H1 (cell line): ENCODE measurements at regions of chr15 and their contacts with region 1.

Region 1: DNA sequence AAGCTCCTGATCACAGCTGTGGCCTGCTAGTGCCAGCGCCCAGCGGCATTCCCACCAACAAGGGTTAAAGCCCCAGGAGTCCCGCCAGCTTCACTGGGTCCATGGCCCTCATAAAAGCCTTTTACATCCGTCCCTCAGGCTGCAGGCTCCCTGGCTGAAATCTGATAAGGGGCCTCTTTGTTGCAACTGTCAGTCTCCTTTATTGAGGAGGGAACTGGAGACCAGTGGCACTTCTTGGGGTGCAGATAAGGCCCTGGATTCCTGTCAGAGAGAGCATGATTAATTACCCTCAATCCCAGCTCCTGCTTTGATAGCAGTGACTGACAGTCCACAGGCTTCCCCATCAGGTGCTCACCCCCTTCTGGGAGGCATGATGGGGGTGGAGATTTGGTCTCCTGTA is 30.9 kb upstream of the CLK3 start:
- DNase-seq: no peak
- H3K4me3 ChIP-seq: no peak overlapping the region
- H3K27ac ChIP-seq: no peak overlapping the region
- H3K4me1 ChIP-seq: peaks cover 0 to 6% (median 5%) of the 10 kb centered on the region in 4 experiments; a peak in 3 of 7 replicates
- H3K27me3 ChIP-seq: no peaks in the 10 kb centered on the region
- CTCF ChIP-seq: no peak
- EP300 ChIP-seq: no peak
- POLR2A ChIP-seq: no peak
- RAD21 ChIP-seq: no peak

Region 2: DNA sequence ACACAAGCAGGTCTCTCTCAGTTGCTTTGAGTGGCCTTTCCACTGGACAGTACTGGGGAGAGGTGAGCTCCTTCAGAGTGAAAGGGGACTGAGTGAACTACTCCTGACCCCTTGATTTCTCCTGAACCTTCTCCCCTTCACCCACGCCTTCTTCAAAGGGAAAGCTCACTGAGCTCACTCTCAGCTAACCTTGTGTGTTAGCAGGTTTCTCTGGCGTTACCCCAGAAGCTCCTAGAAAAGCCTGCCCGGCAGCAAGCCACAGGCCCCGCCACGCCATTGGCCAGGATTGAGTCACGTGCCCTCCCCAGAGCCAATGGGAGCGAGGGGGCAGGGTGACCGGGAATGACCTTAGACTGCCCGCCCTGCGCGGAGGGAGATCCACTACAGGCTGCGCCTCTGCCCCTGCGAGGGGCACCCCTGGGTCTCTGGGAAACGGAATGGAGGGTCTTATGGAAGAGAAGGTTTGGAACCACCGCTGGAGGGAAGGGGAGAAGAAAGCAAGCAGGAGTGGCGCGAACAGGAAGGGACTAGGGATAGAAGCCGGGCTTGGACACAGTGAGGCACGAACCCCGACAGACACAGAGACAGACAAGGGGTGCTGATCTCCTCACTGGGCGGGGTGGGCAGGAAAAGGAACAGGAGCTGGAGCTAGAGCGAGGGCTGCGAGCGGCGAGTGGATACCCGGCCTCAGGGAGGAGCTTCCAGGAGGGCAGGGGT is 13.5 kb after region 1 on chr15:
- CTCF ChIA-PET with region 1: interaction called, 3 read pairs
- POLR2A ChIA-PET with region 1: interaction called, 32 read pairs
- DNase-seq: peak; percentile 62 to 96
- H3K4me3 ChIP-seq: peak overlapping the region in 3 of 4 experiments; percentile 3 to 48 (median 34); a peak in 4 of 8 replicates
- H3K27ac ChIP-seq: no peak overlapping the region
- H3K4me1 ChIP-seq: peaks cover 0 to 3% (median 3%) of the 10 kb centered on the region in 4 experiments; a peak in 5 of 7 replicates
- H3K27me3 ChIP-seq: no peaks in the 10 kb centered on the region; a peak in 1 of 7 replicates
- CTCF ChIP-seq: no peak
- EP300 ChIP-seq: no peak
- POLR2A ChIP-seq: peak in 1 of 2 experiments; percentile 42; a peak in 1 of 3 replicates
- RAD21 ChIP-seq: no peak